ENCODE measurements at regions of chr4 and their contacts with region 1.

Region 1: DNA sequence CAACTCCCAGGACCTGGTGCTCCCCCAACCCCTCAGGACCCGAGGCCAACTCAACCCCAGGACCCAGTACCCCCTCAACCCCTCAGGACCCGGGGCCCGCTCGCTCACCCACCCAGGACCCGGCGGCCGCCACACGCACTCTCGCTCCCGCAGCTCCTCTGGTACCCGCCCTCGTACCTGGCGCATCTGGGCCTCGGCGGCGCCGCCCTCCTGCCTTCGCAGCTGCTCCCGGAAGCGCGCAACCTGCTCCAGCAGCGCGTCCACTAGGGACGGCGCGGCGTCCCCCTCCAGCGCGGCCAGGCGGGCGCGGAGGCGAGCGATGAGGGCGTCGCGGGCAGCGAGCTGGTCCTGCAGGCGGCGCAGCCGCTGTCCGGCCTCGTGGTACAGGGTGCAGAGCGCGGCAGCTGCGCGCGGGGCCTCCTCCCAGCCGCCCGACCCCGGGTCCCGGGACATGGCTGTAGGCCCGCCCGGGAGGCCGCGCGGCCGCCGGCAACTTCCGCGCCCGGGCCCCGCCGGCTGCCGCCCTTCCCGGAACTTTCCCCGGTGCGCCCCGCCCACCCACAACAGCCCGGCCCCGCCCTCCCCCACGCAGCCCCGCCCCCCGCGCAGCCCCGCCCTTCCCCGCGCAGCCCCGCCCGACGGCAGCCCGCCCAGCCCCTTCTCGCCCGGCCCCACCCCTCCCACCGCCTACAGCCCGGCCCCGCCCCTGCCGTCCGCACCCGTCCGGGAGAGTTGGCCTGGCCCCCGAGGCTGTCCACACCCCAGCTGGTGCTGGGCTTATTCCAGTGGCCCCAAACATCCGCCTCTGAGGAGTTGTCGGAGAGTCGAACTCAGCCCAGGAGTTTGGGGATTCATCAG is at the start of gene TNIP2:
- DNase-seq: peak; percentile 80
- H3K4me3 Mint-ChIP-seq: peak within 1 kb of the TSS; percentile 68
- H3K27ac Mint-ChIP-seq: peak within 1 kb of the TSS; percentile 22
- H3K4me1 Mint-ChIP-seq: peaks cover 22% of the 10 kb centered on the region
- H3K27me3 Mint-ChIP-seq: no peaks in the 10 kb centered on the region
- CTCF ChIP-seq: no peak
- total RNA-seq, gene TNIP2: 40.5 and 46.1 TPM in 2 replicates

Region 2: DNA sequence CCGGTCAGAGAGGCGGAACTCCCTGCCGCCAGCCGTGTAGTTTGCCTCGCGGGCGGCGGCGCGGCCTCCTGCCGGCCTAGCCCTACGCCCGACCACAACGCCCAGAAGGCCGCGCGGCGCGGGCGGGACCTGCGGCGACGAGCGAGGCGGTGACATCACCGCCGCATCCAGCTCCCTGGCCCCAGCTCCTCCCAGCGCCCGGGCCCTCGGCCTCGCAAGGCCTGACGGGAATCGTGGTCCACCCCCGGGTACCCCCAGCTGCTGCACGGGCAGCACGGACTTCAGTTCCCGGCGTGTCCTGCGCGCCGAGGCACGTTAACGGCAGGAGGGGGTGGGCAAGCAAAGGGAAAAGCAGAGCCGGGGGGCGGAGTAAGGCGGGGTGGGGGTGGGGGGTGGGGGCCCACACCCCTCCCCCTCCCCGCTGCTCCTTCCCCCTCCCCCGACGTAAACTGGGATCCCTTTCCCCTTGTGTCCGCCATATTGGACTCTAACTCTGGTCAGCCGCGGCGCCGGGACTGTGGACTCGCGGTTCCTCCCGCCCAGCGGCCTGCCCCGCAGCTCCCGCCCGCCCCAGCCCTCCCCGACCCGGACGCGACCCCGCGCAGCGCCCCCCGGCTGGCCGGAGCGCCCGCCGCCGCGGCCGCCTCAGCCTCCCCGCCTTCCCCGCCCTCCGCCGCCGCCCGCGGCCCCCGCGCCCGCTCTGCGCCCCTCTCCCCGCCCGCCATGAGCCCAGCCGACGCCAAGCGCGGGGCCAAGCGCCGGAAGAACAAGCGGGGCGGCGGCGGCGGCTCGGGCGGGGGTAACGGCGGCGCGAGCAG is 219.7 kb before region 1 on chr4 and contains the start of gene FAM193A:
- CTCF ChIA-PET with region 1: no interaction called
- POLR2A ChIA-PET with region 1: no interaction called
- intact Hi-C with region 1: no loop called
- DNase-seq: peak; percentile 99
- H3K4me3 Mint-ChIP-seq: peak within 1 kb of the TSS; percentile 81
- H3K27ac Mint-ChIP-seq: peak within 1 kb of the TSS; percentile 81
- H3K4me1 Mint-ChIP-seq: no peaks in the 10 kb centered on the region
- H3K27me3 Mint-ChIP-seq: no peaks in the 10 kb centered on the region
- CTCF ChIP-seq: no peak
- total RNA-seq, gene FAM193A: 30.7 and 31.3 TPM in 2 replicates

Region 3: GRCh38 chr4:2798399-2799223 is 42.5 kb after region 1 on chr4:
- CTCF ChIA-PET with region 1: no interaction called
- POLR2A ChIA-PET with region 1: interaction called, 14 read pairs
- intact Hi-C with region 1: no loop called
- DNase-seq: peak; percentile 47
- H3K4me3 Mint-ChIP-seq: peak overlapping the region; percentile 16
- H3K27ac Mint-ChIP-seq: peak overlapping the region; percentile 67
- H3K4me1 Mint-ChIP-seq: peaks cover 69% of the 10 kb centered on the region
- H3K27me3 Mint-ChIP-seq: no peaks in the 10 kb centered on the region
- CTCF ChIP-seq: no peak

Measured in MCF 10A (cell line).